CD8-positive, alpha-beta memory T cell (primary cell): ENCODE measurements at regions of chr6 and their contacts with region 1.

Region 1: DNA sequence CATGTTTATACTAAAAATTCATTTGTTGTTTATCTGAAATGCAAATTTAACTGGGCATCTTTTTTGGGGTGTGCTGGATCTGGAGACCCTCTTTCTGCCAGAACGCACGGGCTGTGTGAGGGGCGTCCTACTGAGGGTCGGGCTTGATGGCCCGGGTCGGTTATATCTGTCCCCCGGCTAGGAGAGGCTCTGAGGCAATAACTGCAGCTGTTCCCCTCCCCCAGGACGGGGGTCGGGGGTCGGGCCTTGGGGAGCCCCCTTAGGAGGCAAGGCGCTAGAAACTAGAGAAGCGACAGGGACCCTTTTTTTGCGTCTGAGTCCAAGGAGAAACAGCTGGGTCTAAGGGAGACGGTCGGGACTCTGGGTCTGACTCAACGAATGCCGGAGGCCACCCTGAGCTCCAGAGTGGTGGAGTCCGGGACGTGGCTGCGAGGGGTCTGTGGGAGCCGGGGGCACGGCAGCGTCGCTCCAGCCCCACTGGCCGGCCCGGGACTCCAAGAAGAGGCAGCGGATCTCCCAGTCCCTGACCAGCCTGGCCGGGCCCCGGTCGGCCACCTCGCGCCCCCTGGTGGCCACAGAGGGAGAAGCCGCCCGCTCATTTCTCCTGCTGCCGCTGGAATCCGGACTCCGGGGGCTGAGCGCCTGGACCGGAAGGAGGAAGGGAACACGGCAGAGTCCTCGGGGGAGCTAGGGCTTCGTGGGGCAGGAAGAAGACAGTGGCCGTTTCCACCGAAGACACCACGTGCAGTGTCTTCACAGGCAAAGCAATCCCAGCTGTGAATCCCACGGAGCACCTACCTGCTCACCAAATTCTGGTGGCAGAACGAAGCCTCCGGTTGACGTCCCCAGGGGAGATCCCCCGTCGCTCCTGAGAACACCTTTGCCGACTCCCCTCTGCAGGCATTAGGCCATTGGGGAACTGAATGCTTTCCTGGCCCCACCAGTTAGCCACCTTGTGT is 24.0 kb upstream of the SCML4 start:
- DNase-seq: peak; percentile 71 to 86 (median 79)
- H3K4me3 ChIP-seq: peak overlapping the region; percentile 42
- H3K4me3 Mint-ChIP-seq: peak overlapping the region; percentile 71 to 92 (median 79)
- H3K27ac ChIP-seq: no peak overlapping the region
- H3K27ac Mint-ChIP-seq: peak overlapping the region; percentile 51 to 91 (median 74)
- H3K4me1 ChIP-seq: peaks cover 16% of the 10 kb centered on the region
- H3K4me1 Mint-ChIP-seq: peaks cover 22 to 27% (median 27%) of the 10 kb centered on the region in 3 donors
- H3K27me3 ChIP-seq: no peaks in the 10 kb centered on the region
- H3K27me3 Mint-ChIP-seq: peaks cover 0 to 2% of the 10 kb centered on the region in 2 donors

Region 2: DNA sequence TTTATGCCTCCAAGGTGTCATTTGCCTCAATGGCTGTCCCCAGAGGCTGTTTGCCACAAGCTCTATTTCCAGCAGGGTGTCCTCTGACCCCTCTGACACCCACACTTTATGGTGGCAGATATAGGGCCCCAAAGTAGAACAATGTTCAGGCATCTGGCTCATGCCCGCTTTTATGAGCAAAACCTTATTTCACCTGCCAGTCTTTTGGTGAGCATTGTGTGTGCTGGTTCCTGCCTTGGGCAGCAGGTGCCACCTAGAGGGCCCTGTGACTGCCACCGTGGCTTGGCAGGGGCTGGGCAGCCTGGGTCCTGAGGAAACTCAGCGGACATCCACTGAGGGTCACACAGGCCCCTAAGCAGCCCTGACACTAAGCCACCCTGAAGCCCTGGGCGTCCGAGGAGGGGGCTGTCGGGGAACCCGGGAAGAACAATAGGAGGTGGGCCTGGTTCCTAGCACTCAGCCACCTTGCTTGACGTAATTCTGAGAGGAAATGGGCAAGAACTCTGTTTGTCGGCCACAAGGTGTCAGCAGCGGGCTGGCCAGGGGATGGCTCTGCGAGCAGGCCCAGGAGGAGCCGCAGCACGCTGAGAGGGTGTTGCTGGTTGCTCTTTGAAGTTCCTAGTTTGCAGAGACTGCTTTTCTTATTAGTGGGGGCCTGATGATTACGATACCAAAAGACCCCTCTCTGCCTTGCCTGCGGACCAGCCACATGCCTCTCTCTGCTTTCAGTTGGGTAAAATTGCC is 173.0 kb before region 1 on chr6:
- CTCF ChIA-PET with region 1: interaction called, 40 read pairs
- POLR2A ChIA-PET with region 1: no interaction called
- DNase-seq: peak; percentile 79 to 92 (median 83)
- H3K4me3 ChIP-seq: no peak overlapping the region
- H3K4me3 Mint-ChIP-seq: peak overlapping the region in 6 of 7 donors; percentile 45 to 81 (median 74)
- H3K27ac ChIP-seq: no peak overlapping the region
- H3K27ac Mint-ChIP-seq: peak overlapping the region in 7 of 8 donors; percentile 6 to 93 (median 88)
- H3K4me1 ChIP-seq: peaks cover 5% of the 10 kb centered on the region
- H3K4me1 Mint-ChIP-seq: peaks cover 10 to 19% (median 17%) of the 10 kb centered on the region in 3 donors
- H3K27me3 ChIP-seq: no peaks in the 10 kb centered on the region
- H3K27me3 Mint-ChIP-seq: peaks cover 0 to 2% of the 10 kb centered on the region in 2 donors

Region 3: GRCh38 chr6:107716688-107717089 is 131.4 kb before region 1 on chr6:
- CTCF ChIA-PET with region 1: interaction called, 19 read pairs
- POLR2A ChIA-PET with region 1: interaction called, 3 read pairs
- DNase-seq: peak; percentile 63 to 90 (median 83)
- H3K4me3 ChIP-seq: no peak overlapping the region
- H3K4me3 Mint-ChIP-seq: peak overlapping the region; percentile 41 to 83 (median 66)
- H3K27ac ChIP-seq: peak overlapping the region; percentile 66
- H3K27ac Mint-ChIP-seq: peak overlapping the region; percentile 87 to 98 (median 96)
- H3K4me1 ChIP-seq: peaks cover 68% of the 10 kb centered on the region
- H3K4me1 Mint-ChIP-seq: peaks cover 73 to 89% (median 88%) of the 10 kb centered on the region in 3 donors
- H3K27me3 ChIP-seq: no peaks in the 10 kb centered on the region
- H3K27me3 Mint-ChIP-seq: no peaks in the 10 kb centered on the region

Region 4: DNA sequence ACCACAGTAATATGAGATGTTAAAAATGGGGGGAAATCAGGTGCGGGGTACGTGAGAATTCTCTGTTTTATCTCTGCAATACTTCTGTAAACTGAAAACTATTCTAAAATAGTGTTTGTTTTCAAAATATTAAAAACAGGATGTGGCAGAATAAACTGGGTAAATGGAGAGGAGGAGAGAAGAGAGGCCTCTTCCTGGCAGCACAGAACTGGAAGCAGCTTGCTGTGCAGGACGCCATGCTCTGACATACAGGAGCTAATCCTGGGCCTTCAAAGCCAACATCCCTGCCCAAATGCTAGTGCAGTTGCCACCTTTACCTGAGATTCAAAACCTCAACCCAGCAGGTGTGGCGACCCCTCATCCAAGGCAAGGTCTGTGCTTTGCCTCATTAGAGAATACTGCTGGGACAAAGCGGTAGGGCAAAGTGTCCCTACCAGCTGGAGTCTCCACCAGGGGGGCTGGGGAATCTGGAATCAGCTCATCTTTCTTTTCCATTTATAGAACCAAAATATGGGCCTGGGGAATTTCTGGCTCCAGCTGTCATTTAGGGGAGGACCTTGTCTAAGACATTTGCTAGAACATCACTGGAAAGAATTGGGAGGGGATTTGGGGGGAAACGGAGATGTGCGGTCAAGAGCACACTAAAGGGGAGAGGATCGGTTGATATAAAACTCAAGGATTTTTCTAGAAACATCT is 91.3 kb before region 1 on chr6:
- CTCF ChIA-PET with region 1: interaction called, 17 read pairs
- POLR2A ChIA-PET with region 1: interaction called, 4 read pairs
- DNase-seq: no peak
- H3K4me3 ChIP-seq: no peak overlapping the region
- H3K4me3 Mint-ChIP-seq: peak overlapping the region in 6 of 7 donors; percentile 24 to 71 (median 58)
- H3K27ac ChIP-seq: no peak overlapping the region
- H3K27ac Mint-ChIP-seq: peak overlapping the region; percentile 32 to 98 (median 84)
- H3K4me1 ChIP-seq: peaks cover 42% of the 10 kb centered on the region
- H3K4me1 Mint-ChIP-seq: peaks cover 63 to 83% (median 72%) of the 10 kb centered on the region in 3 donors
- H3K27me3 ChIP-seq: no peaks in the 10 kb centered on the region
- H3K27me3 Mint-ChIP-seq: peaks cover 0 to 1% of the 10 kb centered on the region in 2 donors

Region 5: DNA sequence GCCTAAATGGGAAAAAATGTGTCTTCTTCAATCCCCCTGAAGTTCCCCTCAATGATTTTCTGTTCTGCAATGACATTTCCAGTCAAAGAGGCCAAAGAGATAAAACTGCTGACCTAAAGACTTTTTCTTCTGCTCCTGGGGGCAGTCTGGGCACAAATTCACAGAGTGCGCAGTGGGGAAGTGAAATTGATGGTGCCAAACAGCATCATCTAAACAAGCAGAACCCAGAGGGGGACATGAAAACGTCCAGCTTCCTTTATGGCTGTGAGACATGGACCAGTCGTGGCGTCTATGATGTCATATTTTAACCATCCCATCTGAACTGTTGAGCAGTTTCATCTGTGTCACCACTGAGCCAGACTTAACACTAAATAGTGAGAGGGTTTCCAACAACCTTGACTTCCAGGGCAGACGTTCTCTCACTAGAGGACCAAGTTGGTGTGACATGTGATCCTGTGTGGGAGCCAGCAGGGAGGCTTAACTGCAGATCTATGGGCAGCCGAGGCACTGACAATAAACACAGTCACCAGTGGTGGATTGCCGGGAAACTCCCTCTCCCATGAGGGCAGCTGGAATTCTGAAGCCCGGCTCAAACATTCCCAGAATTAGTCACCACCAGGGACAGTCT is 36.4 kb before region 1 on chr6:
- CTCF ChIA-PET with region 1: interaction called, 21 read pairs
- POLR2A ChIA-PET with region 1: no interaction called
- DNase-seq: no peak
- H3K4me3 ChIP-seq: no peak overlapping the region
- H3K4me3 Mint-ChIP-seq: peak overlapping the region in 3 of 7 donors; percentile 5 to 32 (median 19)
- H3K27ac ChIP-seq: no peak overlapping the region
- H3K27ac Mint-ChIP-seq: peak overlapping the region; percentile 40 to 81 (median 70)
- H3K4me1 ChIP-seq: peaks cover 40% of the 10 kb centered on the region
- H3K4me1 Mint-ChIP-seq: peaks cover 60 to 97% (median 77%) of the 10 kb centered on the region in 3 donors
- H3K27me3 ChIP-seq: no peaks in the 10 kb centered on the region
- H3K27me3 Mint-ChIP-seq: peaks cover 0 to 1% of the 10 kb centered on the region in 2 donors

Region 6: GRCh38 chr6:107866606-107867301 is 18.6 kb after region 1 on chr6:
- CTCF ChIA-PET with region 1: interaction called, 44 read pairs
- POLR2A ChIA-PET with region 1: no interaction called
- DNase-seq: peak in 2 of 5 donors; percentile 32 to 50
- H3K4me3 ChIP-seq: no peak overlapping the region
- H3K4me3 Mint-ChIP-seq: peak overlapping the region in 1 of 7 donors; percentile 22
- H3K27ac ChIP-seq: no peak overlapping the region
- H3K27ac Mint-ChIP-seq: peak overlapping the region in 1 of 8 donors; percentile 32
- H3K4me1 ChIP-seq: peaks cover 3% of the 10 kb centered on the region
- H3K4me1 Mint-ChIP-seq: peaks cover 2 to 9% (median 6%) of the 10 kb centered on the region in 3 donors
- H3K27me3 ChIP-seq: peaks cover 4% of the 10 kb centered on the region
- H3K27me3 Mint-ChIP-seq: peaks cover 2 to 13% of the 10 kb centered on the region in 2 donors

Region 7: GRCh38 chr6:107931894-107932293 is 83.8 kb after region 1 on chr6:
- CTCF ChIA-PET with region 1: no interaction called
- POLR2A ChIA-PET with region 1: no interaction called
- DNase-seq: no peak
- H3K4me3 ChIP-seq: no peak overlapping the region
- H3K4me3 Mint-ChIP-seq: no peak overlapping the region
- H3K27ac ChIP-seq: no peak overlapping the region
- H3K27ac Mint-ChIP-seq: peak overlapping the region in 3 of 8 donors; percentile 17 to 66 (median 43)
- H3K4me1 ChIP-seq: no peaks in the 10 kb centered on the region
- H3K4me1 Mint-ChIP-seq: peaks cover 25 to 37% (median 36%) of the 10 kb centered on the region in 3 donors
- H3K27me3 ChIP-seq: no peaks in the 10 kb centered on the region
- H3K27me3 Mint-ChIP-seq: no peaks in the 10 kb centered on the region